Activated T-helper 1 cell treated with anti-CD3 and anti-CD28 coated beads, Interleukin-12 subunit alpha, Interleukin-12 subunit beta, Interleukin-2, Interleukin-4 antibody, amounts not matched to agents 30 ng/mL and 10 ng/mL and 1 ng/mL, durations not matched to agents 14 hours and 24 hours and 36 hours (primary cell): ENCODE measurements at regions of chr7 and their contacts with region 1.

Region 1: DNA sequence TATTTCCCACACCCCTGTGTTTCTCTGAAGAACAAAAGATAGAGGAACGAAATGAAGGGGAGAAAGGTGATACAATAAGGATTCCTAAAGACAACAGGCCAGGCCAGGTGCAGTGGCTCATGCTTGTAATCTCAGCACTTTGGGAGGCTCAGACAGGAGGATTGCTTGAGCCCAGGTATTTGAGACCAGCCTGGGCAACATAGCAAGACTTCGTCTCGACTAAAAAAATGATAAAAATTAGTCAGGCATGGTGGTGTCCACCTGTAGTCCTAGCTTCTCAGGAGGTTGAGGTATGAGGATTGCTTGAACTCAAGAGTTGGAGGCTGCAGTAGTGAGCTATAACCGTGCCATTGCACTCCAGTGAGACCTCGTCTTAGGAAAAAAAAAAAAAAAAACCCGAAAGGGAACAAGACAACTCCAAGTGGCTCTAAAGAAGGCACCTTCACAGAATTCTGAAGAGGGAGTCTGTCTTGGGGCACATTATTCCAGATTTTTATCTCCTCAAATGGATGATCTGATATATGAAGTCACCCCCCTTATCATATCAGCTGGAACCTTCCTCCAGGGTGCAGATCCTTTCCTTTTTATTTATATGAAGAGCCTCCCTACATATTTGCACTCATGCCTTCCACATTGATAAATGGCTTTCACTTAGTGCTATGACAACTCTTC is 41.5 kb upstream of the FAM3C start:
- DNase-seq: no peak
- H3K4me3 Mint-ChIP-seq: peak overlapping the region; percentile 68
- H3K27ac Mint-ChIP-seq: peak overlapping the region; percentile 85
- H3K4me1 Mint-ChIP-seq: peaks cover 41% of the 10 kb centered on the region
- H3K27me3 Mint-ChIP-seq: no peaks in the 10 kb centered on the region

Region 2: GRCh38 chr7:121278120-121279021 is 159.2 kb before region 1 on chr7:
- intact Hi-C with region 1: loop called (anchors 5 kb)
- DNase-seq: no peak
- H3K4me3 Mint-ChIP-seq: no peak overlapping the region
- H3K27ac Mint-ChIP-seq: no peak overlapping the region
- H3K4me1 Mint-ChIP-seq: peaks cover 18% of the 10 kb centered on the region
- H3K27me3 Mint-ChIP-seq: peaks cover 8% of the 10 kb centered on the region

Region 3: DNA sequence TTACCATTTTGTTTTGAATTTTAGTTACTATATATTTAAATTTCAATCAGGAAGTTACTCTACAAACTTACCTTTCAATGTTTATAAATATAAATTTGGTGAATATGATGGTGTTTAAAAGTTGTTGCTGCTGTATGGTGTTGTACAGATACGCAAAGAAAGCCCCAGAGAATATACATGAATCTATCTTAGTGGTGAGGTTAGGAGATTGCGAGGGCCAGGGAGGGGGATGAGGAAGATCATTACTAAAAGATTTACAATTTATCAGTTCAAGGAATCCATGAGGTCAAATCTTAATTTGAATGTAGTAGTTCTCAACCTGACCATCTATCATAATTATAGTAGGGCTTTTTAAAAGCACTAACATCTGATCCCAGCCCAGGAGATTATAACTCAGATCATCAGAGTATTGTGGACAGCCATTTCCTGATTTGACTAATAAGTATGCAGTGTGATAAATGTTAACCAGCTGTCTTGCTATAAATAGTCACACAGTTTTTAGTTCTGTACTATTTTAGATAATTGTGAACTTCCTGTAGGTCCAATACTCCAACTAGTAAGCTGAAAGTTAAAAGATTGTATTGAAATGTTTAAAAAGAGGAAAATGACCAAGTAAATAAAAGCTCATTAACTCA is 65.1 kb before region 1 on chr7:
- intact Hi-C with region 1: loop called (anchors 2 kb)
- DNase-seq: no peak
- H3K4me3 Mint-ChIP-seq: peak overlapping the region; percentile 38
- H3K27ac Mint-ChIP-seq: peak overlapping the region; percentile 80
- H3K4me1 Mint-ChIP-seq: peaks cover 76% of the 10 kb centered on the region
- H3K27me3 Mint-ChIP-seq: no peaks in the 10 kb centered on the region

Region 4: GRCh38 chr7:121410829-121411596 is 26.6 kb before region 1 on chr7:
- intact Hi-C with region 1: loop called (anchors 2 kb)
- DNase-seq: no peak
- H3K4me3 Mint-ChIP-seq: no peak overlapping the region
- H3K27ac Mint-ChIP-seq: no peak overlapping the region
- H3K4me1 Mint-ChIP-seq: peaks cover 17% of the 10 kb centered on the region
- H3K27me3 Mint-ChIP-seq: peaks cover 3% of the 10 kb centered on the region

Region 5: DNA sequence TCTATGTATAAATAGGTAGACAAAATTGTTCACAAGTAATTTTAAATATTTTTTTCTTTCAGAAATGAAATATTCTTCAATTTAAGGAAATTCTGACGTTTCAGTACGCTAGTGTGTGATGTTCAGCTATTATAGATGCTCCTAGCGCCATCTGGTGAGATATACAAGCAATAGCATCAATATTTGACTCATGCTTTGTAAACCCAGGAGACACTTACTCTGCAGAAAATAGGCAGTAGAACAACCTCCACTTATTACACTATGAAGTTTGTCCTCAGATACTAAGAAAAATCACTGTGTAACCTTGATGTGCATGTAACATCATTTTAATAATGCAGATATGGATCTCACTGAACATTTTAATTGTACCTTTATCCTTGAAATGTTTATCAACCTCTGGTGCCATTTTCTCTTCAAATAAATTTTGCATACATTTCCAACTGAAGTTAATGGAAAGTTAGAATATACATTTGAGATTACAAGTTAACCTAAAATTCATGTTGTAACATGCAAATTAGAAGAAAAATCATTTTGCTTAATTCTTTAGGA is 110.0 kb after region 1 on chr7:
- intact Hi-C with region 1: loop called (anchors 1 kb)
- DNase-seq: no peak
- H3K4me3 Mint-ChIP-seq: no peak overlapping the region
- H3K27ac Mint-ChIP-seq: no peak overlapping the region
- H3K4me1 Mint-ChIP-seq: peaks cover 39% of the 10 kb centered on the region
- H3K27me3 Mint-ChIP-seq: peaks cover 9% of the 10 kb centered on the region